HEK293 (cell line): ENCODE measurements at regions of chr3 and their contacts with region 1.

Region 1: GRCh38 chr3:4712143-4712542 is 219.0 kb downstream of the ITPR1 start:
- H3K4me3 ChIP-seq: no peak overlapping the region
- H3K27ac ChIP-seq: no peak overlapping the region
- H3K4me1 ChIP-seq: no peaks in the 10 kb centered on the region
- CTCF ChIP-seq: no peak

Region 2: DNA sequence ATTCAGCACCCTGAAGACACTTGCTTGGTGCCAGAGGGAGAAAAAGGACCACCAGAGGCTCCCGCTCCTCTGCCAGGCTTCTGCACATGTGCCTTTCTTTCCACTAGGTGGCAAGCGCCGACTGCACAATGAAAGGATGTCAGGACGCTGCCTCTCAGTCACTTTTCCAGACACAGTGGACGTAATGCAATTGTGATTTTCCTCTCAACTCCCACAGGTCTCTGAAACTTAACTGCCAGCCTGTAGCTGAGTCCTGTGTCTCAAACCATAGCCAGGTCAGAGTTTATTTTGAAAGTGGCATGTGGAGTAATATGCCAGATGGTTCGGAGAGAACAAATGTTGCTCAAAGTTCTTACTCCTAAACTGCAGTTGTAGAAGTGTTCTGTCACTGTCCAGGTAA is 56.1 kb before region 1 on chr3:
- CTCF ChIA-PET with region 1: interaction called, 14 read pairs
- POLR2A ChIA-PET with region 1: no interaction called
- H3K4me3 ChIP-seq: no peak overlapping the region
- H3K27ac ChIP-seq: no peak overlapping the region
- H3K4me1 ChIP-seq: no peaks in the 10 kb centered on the region
- CTCF ChIP-seq: peak; percentile 88

Region 3: GRCh38 chr3:4687167-4687566 is 25.0 kb before region 1 on chr3:
- CTCF ChIA-PET with region 1: interaction called, 10 read pairs
- POLR2A ChIA-PET with region 1: no interaction called
- H3K4me3 ChIP-seq: no peak overlapping the region
- H3K27ac ChIP-seq: no peak overlapping the region
- H3K4me1 ChIP-seq: peaks cover 4% of the 10 kb centered on the region; the same call in 1 of the 2 replicates
- CTCF ChIP-seq: no peak

Region 4: DNA sequence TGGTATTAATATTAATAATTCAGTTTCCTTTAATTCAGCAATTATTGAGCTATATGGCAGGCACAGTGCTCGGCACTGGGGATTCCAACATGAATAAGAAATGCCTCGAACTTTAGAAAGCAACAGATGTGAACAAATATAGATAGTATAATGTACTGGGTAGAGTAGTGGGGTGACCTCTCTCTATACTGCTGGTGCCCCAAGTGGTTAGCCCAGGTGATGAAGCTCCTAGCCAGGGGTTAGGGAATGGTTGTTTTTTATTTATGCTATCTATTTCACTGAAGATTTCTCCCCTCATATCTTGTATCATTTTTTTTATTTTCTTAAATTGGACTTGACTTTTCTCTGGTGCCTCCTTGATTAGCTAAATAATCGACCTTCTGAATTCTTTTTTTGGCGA is 329.2 kb after region 1 on chr3:
- CTCF ChIA-PET with region 1: interaction called, 11 read pairs
- POLR2A ChIA-PET with region 1: no interaction called
- H3K4me3 ChIP-seq: no peak overlapping the region
- H3K27ac ChIP-seq: no peak overlapping the region
- H3K4me1 ChIP-seq: no peaks in the 10 kb centered on the region
- CTCF ChIP-seq: no peak